Posterior vena cava (tissue), 2 donors: ENCODE measurements at regions of chr12 and their contacts with region 1.

Region 1: GRCh38 chr12:123868791-123869190 is 103.8 kb downstream of the CCDC92 start:
- DNase-seq: no peak

Region 2: GRCh38 chr12:123830675-123831074 is 38.1 kb before region 1 on chr12:
- intact Hi-C with region 1: loop called in 1 of 2 experiments (anchors 2 kb)
- DNase-seq: no peak

Region 3: DNA sequence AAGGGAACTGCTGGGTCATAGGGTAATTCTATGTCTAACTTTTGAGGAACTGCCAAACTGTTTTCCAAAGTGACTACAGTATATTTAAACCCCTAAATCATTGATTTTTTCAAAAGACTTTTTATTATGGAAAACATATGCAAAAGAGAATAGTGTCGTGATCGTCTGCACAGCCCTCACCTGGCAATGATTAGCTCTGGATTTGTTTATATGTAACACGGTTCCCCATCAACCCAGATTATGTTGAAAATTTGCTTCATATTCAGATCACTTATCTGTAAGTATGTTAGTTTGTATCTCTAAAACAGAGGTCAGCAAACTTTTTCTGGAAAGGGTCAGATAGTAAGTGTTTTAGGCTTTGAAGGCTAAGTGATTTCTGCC is 51.2 kb after region 1 on chr12:
- intact Hi-C with region 1: no loop called
- DNase-seq: no peak

Region 4: DNA sequence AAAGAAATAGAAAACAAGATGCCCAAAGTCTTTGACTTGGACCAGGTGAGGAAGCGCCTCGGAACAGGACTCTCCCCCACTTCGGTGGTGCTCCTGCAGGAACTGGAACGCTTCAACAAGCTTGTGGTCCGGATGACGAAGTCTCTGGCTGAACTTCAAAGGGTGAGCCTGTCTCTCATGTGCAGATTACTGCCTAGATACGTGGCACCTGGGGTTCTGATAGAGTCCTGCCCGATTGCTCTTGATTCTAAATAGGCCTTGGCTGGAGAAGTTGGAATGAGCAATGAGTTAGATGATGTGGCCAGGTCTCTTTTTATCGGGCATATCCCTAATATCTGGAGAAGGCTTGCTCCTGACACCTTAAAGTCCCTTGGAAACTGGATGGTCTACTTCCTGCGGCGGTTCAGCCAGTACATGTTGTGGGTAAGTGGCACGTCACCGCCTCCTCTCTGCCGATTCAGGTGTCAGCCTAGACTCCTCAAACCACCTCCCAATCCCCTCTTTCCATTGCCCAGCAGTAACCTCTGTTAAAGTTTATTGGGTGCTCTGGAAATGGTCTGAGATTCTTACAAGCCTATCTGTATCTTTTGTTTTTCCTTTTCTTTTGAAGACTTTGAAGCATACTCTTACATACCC is 63.0 kb after region 1 on chr12:
- intact Hi-C with region 1: no loop called
- DNase-seq: peak; percentile 54